ENCODE measurements at regions of chr9 and their contacts with region 1.

Region 1: GRCh38 chr9:73683862-73684591 is 532.4 kb downstream of the ANXA1 start:
- DNase-seq: peak; percentile 15
- ATAC-seq: no peak
- H3K4me3 ChIP-seq: no peak overlapping the region
- H3K27ac ChIP-seq: no peak overlapping the region
- H3K4me1 ChIP-seq: no peaks in the 10 kb centered on the region
- H3K27me3 ChIP-seq: no peaks in the 10 kb centered on the region
- CTCF ChIP-seq: peak; percentile 55

Region 2: DNA sequence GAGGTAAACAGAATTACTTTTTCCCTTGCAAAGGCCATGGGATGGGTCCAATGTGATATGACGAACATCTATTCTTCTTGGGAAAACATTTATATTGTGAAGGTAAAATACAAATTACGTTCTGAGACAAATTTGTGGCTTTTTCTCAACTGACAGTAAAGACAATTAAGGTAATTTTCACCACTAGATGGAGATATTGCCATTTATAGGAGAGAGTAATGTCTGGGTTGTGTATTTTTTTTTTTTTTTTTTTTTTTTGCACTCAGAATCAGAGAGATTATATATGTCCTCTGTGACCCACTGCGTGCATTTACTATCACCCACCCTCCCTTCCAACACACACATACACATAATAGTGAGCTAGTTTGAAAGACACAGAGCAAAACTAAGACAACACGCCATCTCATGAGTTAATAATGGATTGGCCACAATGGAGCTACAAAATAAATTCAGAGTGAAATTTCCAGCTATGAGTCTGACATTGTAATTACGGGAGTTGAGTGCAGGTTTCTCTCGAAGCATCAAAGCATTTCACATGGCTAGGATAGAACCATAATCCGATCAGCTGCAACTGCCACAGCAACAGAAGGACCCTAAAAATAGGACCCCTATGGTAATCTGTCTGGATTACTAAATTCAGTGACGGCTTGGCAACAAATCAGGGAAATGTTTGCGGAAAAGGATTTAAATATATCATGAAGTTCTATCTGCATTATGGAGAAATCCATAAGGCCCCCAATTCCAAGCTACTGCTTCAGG is 483.2 kb before region 1 on chr9:
- CTCF ChIA-PET with region 1: interaction called, 11 read pairs
- POLR2A ChIA-PET with region 1: no interaction called
- in situ Hi-C with region 1: no loop called
- intact Hi-C with region 1: no loop called
- DNase-seq: no peak
- ATAC-seq: no peak
- H3K4me3 ChIP-seq: no peak overlapping the region
- H3K27ac ChIP-seq: no peak overlapping the region
- H3K4me1 ChIP-seq: no peaks in the 10 kb centered on the region
- H3K27me3 ChIP-seq: no peaks in the 10 kb centered on the region
- CTCF ChIP-seq: peak; percentile 11; the same call in 1 of the 2 replicates

Region 3: GRCh38 chr9:74218385-74219063 is 534.5 kb after region 1 on chr9:
- CTCF ChIA-PET with region 1: no interaction called
- POLR2A ChIA-PET with region 1: no interaction called
- in situ Hi-C with region 1: no loop called
- intact Hi-C with region 1: no loop called
- DNase-seq: no peak
- ATAC-seq: no peak
- H3K4me3 ChIP-seq: no peak overlapping the region
- H3K27ac ChIP-seq: no peak overlapping the region
- H3K4me1 ChIP-seq: no peaks in the 10 kb centered on the region
- H3K27me3 ChIP-seq: no peaks in the 10 kb centered on the region
- CTCF ChIP-seq: no peak

Region 4: GRCh38 chr9:74379718-74380117 is 695.7 kb after region 1 on chr9:
- CTCF ChIA-PET with region 1: no interaction called
- POLR2A ChIA-PET with region 1: no interaction called
- in situ Hi-C with region 1: no loop called
- intact Hi-C with region 1: loop called (anchors 10 kb)
- DNase-seq: peak; percentile 5
- ATAC-seq: no peak
- H3K4me3 ChIP-seq: no peak overlapping the region
- H3K27ac ChIP-seq: no peak overlapping the region
- H3K4me1 ChIP-seq: no peaks in the 10 kb centered on the region
- H3K27me3 ChIP-seq: no peaks in the 10 kb centered on the region
- CTCF ChIP-seq: peak; percentile 27

Region 5: DNA sequence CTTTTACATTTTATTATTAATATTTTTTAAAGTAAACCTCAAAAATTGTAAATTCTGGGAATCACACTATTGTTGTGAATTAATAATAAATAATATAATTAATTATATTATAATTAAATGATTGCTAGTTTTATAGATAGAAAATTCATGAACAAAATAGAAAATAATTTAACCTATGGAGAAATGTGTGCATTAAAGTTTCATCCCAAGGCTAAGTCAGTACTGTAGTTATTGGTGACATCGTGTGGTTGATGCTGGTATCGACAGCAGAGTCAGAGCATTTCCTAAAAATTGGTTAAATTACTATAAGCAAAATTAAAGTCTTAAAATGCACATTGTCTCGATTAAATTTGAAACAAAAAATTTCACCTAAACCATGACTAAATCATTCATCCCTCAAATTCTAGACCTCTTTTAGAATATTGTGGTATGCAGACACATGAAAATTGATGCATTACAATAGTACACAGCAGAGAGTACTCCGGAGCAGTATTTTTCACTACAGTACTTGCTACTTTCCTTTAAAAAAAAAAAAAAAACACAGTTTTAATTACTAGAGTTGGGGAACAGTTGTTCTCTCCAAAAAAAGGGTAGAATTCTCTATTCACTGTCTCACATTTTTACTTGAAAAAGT is 887.0 kb after region 1 on chr9:
- CTCF ChIA-PET with region 1: no interaction called
- POLR2A ChIA-PET with region 1: no interaction called
- in situ Hi-C with region 1: no loop called
- intact Hi-C with region 1: loop called (anchors 2 kb)
- DNase-seq: peak; percentile 17
- ATAC-seq: no peak
- H3K4me3 ChIP-seq: no peak overlapping the region
- H3K27ac ChIP-seq: no peak overlapping the region
- H3K4me1 ChIP-seq: no peaks in the 10 kb centered on the region
- H3K27me3 ChIP-seq: no peaks in the 10 kb centered on the region
- CTCF ChIP-seq: peak; percentile 50; the same call in 1 of the 2 replicates

Region 6: GRCh38 chr9:74645007-74645639 is 961.1 kb after region 1 on chr9:
- CTCF ChIA-PET with region 1: no interaction called
- POLR2A ChIA-PET with region 1: no interaction called
- in situ Hi-C with region 1: no loop called
- intact Hi-C with region 1: loop called (anchors 2 kb)
- DNase-seq: peak; percentile 10
- ATAC-seq: 0 out of 2 replicates have a peak, but pooled peaks have one; percentile 63
- H3K4me3 ChIP-seq: no peak overlapping the region
- H3K27ac ChIP-seq: no peak overlapping the region
- H3K4me1 ChIP-seq: no peaks in the 10 kb centered on the region
- H3K27me3 ChIP-seq: no peaks in the 10 kb centered on the region
- CTCF ChIP-seq: peak; percentile 66; the same call in 1 of the 2 replicates

Region 7: DNA sequence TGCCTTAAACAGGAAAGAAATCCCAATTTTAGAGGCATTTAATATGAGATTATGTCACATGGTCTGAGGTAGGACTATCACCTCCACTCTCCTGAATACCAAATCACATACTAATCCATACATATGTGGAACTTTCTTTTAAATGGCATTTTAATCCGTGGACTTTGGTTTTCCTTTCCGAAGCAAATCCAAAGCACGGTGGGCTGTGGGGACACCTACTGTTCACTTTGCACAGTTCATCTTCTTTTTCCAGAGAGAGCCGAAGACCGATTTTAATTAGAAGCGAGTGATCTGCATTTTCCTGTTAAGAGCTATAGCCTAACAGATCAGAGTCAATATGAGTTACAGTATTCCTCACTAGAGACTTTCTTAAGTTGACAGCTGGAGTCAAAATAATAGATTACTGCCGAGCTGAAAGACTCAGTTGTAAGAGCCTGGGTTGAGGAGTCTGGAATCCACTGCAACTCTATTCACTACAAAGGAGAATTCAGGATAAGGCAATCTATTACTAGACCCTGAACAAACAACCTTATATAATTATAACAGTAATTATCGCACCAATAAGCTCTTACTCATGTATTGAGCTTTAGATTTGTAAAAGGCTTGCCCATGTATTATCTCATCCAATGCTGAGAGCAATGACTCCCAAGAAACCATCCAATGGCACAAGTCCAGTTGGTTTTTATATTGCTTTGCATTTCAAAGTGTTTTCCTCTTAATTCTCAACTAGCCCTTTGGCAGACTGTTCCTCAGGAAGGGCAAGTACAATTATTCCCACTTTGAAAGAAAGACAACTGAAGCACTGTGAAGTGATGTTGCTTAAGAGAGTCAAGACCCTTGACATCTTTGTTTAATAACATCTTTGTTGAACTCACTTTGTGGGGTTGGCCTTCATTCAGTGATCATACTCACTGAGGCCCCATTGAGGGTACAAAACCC is 1059.0 kb after region 1 on chr9:
- CTCF ChIA-PET with region 1: no interaction called
- POLR2A ChIA-PET with region 1: no interaction called
- in situ Hi-C with region 1: no loop called
- intact Hi-C with region 1: loop called (anchors 5 kb)
- DNase-seq: no peak
- ATAC-seq: 0 out of 2 replicates have a peak, but pooled peaks have one; percentile 65
- H3K4me3 ChIP-seq: no peak overlapping the region
- H3K27ac ChIP-seq: no peak overlapping the region
- H3K4me1 ChIP-seq: no peaks in the 10 kb centered on the region
- H3K27me3 ChIP-seq: no peaks in the 10 kb centered on the region; the same call in 1 of the 2 replicates
- CTCF ChIP-seq: peak; percentile 71